IMR-90 (cell line): ENCODE measurements at regions of chr14 and their contacts with region 1.

Region 1: GRCh38 chr14:60317609-60318008 is 68.6 kb downstream of the PPM1A start:
- DNase-seq: no peak
- ATAC-seq: no peak
- H3K4me3 ChIP-seq: no peak overlapping the region
- H3K27ac ChIP-seq: no peak overlapping the region
- H3K4me1 ChIP-seq: no peaks in the 10 kb centered on the region; the same call in 1 of the 2 replicates
- H3K27me3 ChIP-seq: peaks cover 40% of the 10 kb centered on the region
- CTCF ChIP-seq: no peak
- POLR2A ChIP-seq: no peak
- RAD21 ChIP-seq: no peak

Region 2: DNA sequence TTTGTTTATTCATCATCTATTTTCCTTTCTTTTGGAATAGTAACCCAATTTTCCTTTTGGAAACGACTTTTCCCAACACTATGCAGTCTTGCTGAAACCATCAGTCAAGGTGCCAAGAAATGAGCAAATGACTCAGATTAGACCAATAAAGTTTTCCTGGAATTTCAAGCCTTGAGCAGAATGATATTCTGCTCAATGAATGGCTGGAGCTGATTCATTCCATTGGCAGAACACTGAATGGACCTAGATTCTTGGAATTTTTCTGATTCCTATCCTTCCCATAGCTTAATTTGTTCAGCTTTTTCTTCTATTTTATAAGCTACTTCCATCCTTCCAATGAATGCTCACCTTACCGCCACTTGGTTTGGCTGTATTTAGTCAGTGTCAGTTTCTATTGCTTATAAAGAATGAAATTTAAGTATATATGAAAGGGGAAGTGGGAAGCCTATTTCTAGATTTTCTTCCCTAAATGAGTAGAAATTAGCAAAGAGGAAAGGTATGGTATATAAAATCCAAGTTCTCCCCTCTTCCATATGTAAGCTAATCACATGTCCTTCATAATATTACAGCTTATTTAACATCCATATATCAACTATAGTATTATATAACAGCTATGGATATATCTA is 79.2 kb after region 1 on chr14:
- CTCF ChIA-PET with region 1: no interaction called
- POLR2A ChIA-PET with region 1: no interaction called
- dilution Hi-C with region 1: no loop called
- in situ Hi-C with region 1: no loop called
- intact Hi-C with region 1: no loop called
- DNase-seq: peak; percentile 1
- ATAC-seq: no peak
- H3K4me3 ChIP-seq: no peak overlapping the region
- H3K27ac ChIP-seq: no peak overlapping the region
- H3K4me1 ChIP-seq: no peaks in the 10 kb centered on the region
- H3K27me3 ChIP-seq: no peaks in the 10 kb centered on the region
- CTCF ChIP-seq: no peak
- POLR2A ChIP-seq: no peak
- RAD21 ChIP-seq: no peak

Region 3: GRCh38 chr14:60561845-60562746 is 244.5 kb after region 1 on chr14:
- CTCF ChIA-PET with region 1: interaction called, 3 read pairs
- POLR2A ChIA-PET with region 1: interaction called, 22 read pairs
- dilution Hi-C with region 1: no loop called
- in situ Hi-C with region 1: no loop called
- intact Hi-C with region 1: no loop called
- DNase-seq: peak; percentile 82
- ATAC-seq: peak; percentile 89
- H3K4me3 ChIP-seq: no peak overlapping the region
- H3K27ac ChIP-seq: no peak overlapping the region
- H3K4me1 ChIP-seq: 0 out of 2 replicates have a peak, but pooled peaks cover 1% of the 10 kb centered on the region
- H3K27me3 ChIP-seq: no peaks in the 10 kb centered on the region
- CTCF ChIP-seq: peak; percentile 80
- POLR2A ChIP-seq: no peak
- RAD21 ChIP-seq: peak; percentile 79